ENCODE measurements at regions of chr9 and their contacts with region 1.

Region 1: DNA sequence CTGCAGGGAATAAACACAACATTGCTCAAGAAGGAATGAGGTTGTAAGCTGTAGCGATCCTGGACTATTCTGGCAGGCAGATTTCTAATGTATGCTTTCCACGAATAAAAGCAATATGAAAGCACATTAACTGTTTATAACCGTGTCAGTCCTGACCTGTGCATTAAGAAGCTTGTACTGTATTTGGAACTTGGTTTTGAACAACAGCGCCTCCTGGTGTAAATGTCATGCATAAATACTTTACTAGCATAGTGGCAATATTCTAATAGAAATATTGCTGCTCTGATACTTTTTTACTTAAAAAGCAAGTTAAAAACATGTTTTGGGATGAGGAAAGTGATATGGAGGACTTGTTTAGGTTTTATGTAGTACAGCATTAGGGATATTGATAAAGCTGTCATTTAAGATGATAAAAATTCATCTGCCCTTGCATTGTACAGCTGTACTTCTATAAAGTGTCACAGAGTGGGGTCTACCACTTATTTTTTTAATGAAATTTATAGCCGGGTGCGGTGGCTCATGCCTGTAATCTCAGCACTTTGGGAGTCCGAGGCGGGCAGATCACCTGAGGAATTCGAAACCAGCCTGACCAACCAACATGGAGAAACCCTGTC is 70.7 kb upstream of the GNE start:
- DNase-seq: peak; percentile 31
- H3K4me3 ChIP-seq: no peak overlapping the region
- CTCF ChIP-seq: peak; percentile 49

Region 2: DNA sequence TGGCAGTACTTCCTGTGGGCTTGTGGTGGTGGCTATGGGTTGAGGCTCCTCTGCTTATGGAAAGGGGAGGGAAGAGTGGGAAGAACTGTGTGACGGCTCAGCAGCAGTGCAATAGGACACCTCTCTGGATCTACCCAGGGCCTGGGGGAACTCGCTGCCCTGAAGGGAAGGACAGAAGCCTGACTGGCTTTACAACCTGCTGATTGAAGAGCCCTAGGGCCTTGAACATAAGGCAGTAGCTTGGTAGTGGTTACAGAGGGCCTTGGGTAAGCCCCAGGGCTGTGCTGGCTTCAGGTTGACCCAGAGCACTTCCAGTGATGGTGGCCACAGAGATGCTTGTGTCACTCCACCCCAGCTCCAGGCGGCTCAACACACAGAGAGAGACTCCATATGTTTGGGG is 154.2 kb before region 1 on chr9:
- CTCF ChIA-PET with region 1: no interaction called
- POLR2A ChIA-PET with region 1: no interaction called
- DNase-seq: no peak
- H3K4me3 ChIP-seq: no peak overlapping the region
- CTCF ChIP-seq: no peak

Region 3: DNA sequence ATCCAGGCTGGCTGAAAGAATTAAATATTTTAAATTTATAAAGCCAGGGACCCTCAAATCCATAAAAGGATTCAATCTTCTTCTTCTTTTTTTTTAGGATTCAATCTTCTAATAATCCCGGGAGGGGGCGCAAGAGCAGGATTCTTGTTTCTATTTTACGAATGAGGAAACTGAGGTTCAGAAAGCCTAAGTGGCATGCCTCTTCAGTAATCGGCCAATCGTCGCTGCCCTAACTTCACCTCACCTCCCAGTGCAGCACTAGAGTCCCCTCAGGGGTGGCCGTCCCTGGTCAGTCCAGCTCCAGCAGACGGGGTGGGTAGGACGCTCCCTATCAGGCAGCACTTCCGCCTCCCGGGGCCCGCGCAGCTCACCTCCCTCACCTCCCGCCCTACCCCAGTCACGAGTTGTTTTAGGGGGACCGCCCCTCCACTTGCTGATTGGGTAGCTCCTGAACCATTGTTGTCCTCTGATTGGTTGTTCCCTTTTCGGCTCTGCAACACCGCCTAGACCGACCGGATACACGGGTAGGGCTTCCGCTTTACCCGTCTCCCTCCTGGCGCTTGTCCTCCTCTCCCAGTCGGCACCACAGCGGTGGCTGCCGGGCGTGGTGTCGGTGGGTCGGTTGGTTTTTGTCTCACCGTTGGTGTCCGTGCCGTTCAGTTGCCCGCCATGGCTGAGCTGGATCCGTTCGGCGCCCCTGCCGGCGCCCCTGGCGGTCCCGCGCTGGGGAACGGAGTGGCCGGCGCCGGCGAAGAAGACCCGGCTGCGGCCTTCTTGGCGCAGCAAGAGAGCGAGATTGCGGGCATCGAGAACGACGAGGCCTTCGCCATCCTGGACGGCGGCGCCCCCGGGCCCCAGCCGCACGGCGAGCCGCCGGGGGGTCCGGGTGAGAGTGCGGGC is 138.3 kb before region 1 on chr9 and contains the start of gene CLTA:
- CTCF ChIA-PET with region 1: interaction called, 12 read pairs
- POLR2A ChIA-PET with region 1: no interaction called
- DNase-seq: peak; percentile 91
- H3K4me3 ChIP-seq: peak within 1 kb of the TSS; percentile 68
- CTCF ChIP-seq: peak; percentile 33

Region 4: DNA sequence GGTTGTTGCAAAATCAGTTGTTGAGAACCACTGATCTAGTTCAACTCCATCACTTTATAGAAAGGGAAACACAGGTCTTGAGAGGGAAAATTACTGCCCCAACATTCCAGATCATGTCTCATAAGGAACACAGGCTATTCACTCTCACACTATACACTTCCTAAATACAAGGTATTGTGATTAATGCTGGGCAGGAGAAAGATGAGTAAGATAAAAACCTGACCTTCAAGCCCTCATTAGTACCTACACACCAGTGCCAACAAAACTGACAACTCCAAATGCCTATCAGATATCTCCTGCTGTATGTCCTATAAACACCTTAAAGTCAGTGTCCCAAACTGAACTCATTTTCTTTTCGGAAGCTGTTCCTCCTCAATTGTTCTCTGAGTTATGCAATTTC is 78.8 kb before region 1 on chr9:
- CTCF ChIA-PET with region 1: interaction called, 276 read pairs
- POLR2A ChIA-PET with region 1: no interaction called
- DNase-seq: no peak
- H3K4me3 ChIP-seq: no peak overlapping the region
- CTCF ChIP-seq: no peak

Region 5: DNA sequence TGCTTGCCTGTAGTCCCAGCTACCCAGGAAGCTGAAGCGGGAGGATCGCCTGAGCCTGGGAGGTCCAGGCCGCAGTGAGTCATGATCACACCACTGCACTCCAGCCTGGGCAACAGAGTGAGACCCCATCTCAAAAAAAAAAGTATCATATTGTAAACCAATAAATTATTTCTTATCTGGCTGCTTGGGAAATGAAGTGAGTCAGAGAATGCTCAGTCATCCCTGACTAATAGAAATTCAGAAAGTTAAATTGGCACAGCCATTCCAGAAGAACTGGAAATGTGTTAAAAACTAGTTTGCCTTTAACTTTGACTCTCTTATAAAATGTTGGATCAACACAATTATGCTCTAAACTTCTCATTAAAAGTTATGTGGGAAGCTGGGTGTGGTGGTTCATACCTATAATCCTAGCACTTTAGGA is 60.9 kb before region 1 on chr9:
- CTCF ChIA-PET with region 1: interaction called, 15 read pairs
- POLR2A ChIA-PET with region 1: no interaction called
- DNase-seq: no peak
- H3K4me3 ChIP-seq: no peak overlapping the region
- CTCF ChIP-seq: no peak

Region 6: DNA sequence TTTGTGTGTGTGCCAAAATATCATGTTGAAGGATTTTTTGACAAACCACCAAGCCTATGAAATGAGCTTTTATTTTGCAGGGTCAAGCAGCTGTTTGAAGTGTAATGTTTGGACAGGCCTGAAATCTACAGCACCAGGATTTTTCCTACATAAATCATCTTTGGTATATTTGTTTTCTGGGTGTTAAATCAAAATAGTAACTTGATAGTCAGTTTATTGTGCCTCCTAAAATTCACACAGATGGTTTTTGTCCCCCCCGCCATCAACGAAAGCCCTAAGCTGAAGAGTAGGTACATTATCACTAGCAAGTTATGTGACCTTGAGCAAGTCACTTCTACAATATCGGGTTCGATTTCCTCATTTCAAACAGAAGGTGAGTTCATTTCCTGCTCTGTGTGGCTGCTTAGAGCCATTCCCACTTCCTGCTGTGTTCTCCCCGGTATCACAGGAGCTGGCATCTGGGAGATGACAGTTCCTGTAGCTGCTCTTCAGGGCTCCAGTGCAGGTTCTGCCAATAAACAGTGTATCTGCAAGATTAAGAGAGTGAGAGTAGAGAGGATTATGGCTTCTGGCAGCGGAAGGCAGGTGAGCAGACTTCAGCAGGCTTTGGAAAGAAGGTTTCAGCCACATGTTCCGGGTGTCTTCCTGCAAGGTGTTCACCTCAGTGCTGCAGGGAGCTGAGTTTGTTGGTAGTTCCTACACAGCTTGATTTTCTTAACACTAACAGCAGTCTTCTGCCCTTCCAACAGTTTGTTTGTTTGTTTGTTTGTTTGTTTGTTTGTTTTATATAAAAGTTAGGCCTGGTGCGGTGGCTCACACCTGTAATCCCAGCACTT is 22.2 kb before region 1 on chr9:
- CTCF ChIA-PET with region 1: interaction called, 19 read pairs
- POLR2A ChIA-PET with region 1: no interaction called
- DNase-seq: no peak
- H3K4me3 ChIP-seq: no peak overlapping the region
- CTCF ChIP-seq: no peak

Region 7: DNA sequence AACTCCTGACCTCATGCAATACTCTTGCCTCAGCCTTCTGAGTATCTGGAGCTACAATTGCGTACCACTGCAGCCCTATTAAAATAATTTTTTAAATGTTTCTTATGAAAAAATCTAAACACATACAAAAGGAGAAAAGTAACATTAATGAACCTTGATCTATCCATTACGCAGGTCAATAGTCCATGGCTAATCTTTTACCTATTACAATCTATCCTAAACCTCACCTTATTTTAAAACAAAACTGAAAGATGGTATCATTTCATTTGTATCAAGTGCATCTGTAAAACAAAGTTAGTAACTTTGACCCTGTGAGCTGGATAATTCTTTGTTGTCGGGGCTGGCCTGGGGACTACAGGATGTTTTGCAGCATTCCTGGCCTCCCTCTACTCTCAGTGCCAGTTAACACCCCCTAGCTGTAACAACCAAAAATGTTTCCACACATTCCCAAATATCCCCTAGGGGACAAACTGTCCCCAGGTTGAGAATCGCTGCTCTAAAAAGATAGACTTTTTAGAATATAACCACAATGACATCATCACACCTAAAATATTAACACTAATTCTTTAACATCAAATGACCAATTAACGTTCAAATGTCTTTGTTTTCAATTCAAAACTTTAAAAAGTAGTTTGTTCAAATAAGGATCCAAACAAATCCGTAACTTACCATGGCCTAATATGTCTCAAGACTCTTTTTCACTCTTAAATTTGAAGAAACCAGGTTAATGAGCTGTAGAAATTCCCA is 16.4 kb after region 1 on chr9:
- CTCF ChIA-PET with region 1: interaction called, 97 read pairs
- POLR2A ChIA-PET with region 1: no interaction called
- DNase-seq: no peak
- H3K4me3 ChIP-seq: no peak overlapping the region
- CTCF ChIP-seq: no peak

Region 8: GRCh38 chr9:36415822-36416515 is 87.1 kb after region 1 on chr9:
- CTCF ChIA-PET with region 1: no interaction called
- POLR2A ChIA-PET with region 1: no interaction called
- DNase-seq: no peak
- H3K4me3 ChIP-seq: no peak overlapping the region
- CTCF ChIP-seq: no peak

Region 9: GRCh38 chr9:36479101-36479500 is 150.2 kb after region 1 on chr9:
- CTCF ChIA-PET with region 1: no interaction called
- POLR2A ChIA-PET with region 1: no interaction called
- DNase-seq: no peak
- H3K4me3 ChIP-seq: no peak overlapping the region
- CTCF ChIP-seq: no peak

Region 10: GRCh38 chr9:36560857-36561221 is 231.9 kb after region 1 on chr9:
- CTCF ChIA-PET with region 1: no interaction called
- POLR2A ChIA-PET with region 1: no interaction called
- DNase-seq: no peak
- H3K4me3 ChIP-seq: no peak overlapping the region
- CTCF ChIP-seq: no peak